ENCODE measurements at regions of chr7 and their contacts with region 1.

Region 1: DNA sequence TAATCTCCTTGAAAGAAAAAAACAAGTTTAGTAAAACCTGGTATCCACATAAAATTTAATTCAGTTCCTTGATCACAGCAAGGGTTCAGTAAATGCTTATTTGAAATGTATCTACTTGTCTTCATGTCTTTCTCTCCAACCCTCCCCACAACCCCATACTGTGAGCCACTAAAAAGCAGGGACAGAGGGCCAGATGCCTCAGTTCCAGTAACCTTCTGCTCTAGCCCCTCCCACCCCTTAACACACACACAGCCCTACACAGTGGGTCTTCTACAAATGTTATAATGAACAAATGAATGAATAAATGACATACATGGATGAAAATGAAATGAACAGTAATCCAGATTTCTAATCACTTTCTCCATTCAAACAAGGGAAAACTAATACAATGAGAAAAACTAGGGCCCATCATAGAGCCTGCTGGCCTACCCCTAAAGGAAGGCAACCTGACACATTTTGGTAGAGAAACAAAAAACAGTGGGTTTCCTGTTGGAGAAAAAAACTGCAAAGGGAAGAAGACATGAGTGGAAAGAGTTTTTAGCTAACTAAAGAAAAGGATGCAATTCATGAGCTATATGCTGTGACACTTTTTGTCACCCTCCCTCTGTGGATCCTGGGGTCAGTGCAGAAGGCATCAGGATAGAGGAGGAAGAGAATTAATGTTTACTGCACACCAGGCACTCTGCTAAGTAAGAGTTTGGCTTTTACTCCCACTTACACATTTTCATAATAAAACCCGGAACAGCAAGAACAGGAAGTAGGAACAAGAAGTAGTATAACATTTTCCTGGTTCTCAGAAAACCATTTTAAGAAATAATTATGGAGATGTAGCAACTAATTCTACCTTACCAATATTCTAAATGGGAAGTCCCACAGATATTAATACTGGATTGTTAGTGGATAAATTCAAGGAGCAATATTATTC is 38.1 kb downstream of the ELMO1 start:
- DNase-seq: no peak
- ATAC-seq: no peak
- H3K4me3 ChIP-seq: no peak overlapping the region
- H3K27ac ChIP-seq: no peak overlapping the region
- H3K4me1 ChIP-seq: no peaks in the 10 kb centered on the region
- H3K27me3 ChIP-seq: no peaks in the 10 kb centered on the region
- CTCF ChIP-seq: no peak
- POLR2A ChIP-seq: no peak

Region 2: DNA sequence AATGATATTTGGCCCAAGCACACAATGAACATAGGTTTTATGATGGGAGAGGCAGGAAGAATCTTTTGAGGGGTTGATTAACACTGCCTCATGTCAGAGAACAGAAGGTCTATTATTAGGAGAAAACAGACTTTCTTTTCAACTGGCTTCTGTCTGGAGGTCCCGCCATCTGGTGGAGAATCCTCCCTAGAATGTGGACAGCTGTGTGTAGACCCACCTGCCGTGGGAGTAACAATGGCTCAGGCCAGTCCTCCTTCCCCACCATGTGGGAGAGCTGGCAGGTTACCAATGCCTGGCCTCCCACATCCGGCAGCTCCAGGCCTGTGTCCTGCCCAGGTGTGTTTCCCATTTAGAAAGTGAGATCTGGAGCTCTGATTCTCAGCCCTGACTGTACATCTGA is 615.9 kb before region 1 on chr7:
- intact Hi-C with region 1: no loop called
- DNase-seq: peak in 3 of 4 donors; percentile 21 to 35 (median 28)
- ATAC-seq: no peak
- H3K4me3 ChIP-seq: no peak overlapping the region
- H3K27ac ChIP-seq: peak overlapping the region in 3 of 4 donors; percentile 24 to 53 (median 40)
- H3K4me1 ChIP-seq: peaks cover 33% of the 10 kb centered on the region
- H3K27me3 ChIP-seq: no peaks in the 10 kb centered on the region
- CTCF ChIP-seq: no peak
- POLR2A ChIP-seq: no peak

Region 3: GRCh38 chr7:37352974-37353948 is 57.3 kb before region 1 on chr7:
- intact Hi-C with region 1: loop called (anchors 10 kb)
- DNase-seq: peak in 1 of 4 donors; percentile 37
- ATAC-seq: no peak
- H3K4me3 ChIP-seq: no peak overlapping the region
- H3K27ac ChIP-seq: peak overlapping the region in 1 of 4 donors; percentile 66
- H3K4me1 ChIP-seq: peaks cover 4% of the 10 kb centered on the region
- H3K27me3 ChIP-seq: no peaks in the 10 kb centered on the region
- CTCF ChIP-seq: peak in 3 of 7 experiments; percentile 5 to 29 (median 15)
- POLR2A ChIP-seq: no peak

Region 4: GRCh38 chr7:37376386-37376785 is 34.2 kb before region 1 on chr7:
- intact Hi-C with region 1: no loop called
- DNase-seq: no peak
- ATAC-seq: no peak
- H3K4me3 ChIP-seq: no peak overlapping the region
- H3K27ac ChIP-seq: no peak overlapping the region
- H3K4me1 ChIP-seq: no peaks in the 10 kb centered on the region
- H3K27me3 ChIP-seq: no peaks in the 10 kb centered on the region
- CTCF ChIP-seq: no peak
- POLR2A ChIP-seq: no peak

Region 5: GRCh38 chr7:37683246-37684120 is 272.9 kb after region 1 on chr7 and contains the start of gene GPR141:
- intact Hi-C with region 1: no loop called
- DNase-seq: peak in 1 of 4 donors; percentile 42
- ATAC-seq: no peak
- H3K4me3 ChIP-seq: no peak within 1 kb of the TSS
- H3K27ac ChIP-seq: peak within 1 kb of the TSS in 1 of 4 donors; percentile 7
- H3K4me1 ChIP-seq: no peaks in the 10 kb centered on the region
- H3K27me3 ChIP-seq: no peaks in the 10 kb centered on the region
- CTCF ChIP-seq: no peak
- POLR2A ChIP-seq: no peak
- total RNA-seq, gene GPR141: 6.3 TPM in 1 of 2 donors, not detected in the other